Panc1 (cell line): ENCODE measurements at regions of chr1 and their contacts with region 1.

Region 1: DNA sequence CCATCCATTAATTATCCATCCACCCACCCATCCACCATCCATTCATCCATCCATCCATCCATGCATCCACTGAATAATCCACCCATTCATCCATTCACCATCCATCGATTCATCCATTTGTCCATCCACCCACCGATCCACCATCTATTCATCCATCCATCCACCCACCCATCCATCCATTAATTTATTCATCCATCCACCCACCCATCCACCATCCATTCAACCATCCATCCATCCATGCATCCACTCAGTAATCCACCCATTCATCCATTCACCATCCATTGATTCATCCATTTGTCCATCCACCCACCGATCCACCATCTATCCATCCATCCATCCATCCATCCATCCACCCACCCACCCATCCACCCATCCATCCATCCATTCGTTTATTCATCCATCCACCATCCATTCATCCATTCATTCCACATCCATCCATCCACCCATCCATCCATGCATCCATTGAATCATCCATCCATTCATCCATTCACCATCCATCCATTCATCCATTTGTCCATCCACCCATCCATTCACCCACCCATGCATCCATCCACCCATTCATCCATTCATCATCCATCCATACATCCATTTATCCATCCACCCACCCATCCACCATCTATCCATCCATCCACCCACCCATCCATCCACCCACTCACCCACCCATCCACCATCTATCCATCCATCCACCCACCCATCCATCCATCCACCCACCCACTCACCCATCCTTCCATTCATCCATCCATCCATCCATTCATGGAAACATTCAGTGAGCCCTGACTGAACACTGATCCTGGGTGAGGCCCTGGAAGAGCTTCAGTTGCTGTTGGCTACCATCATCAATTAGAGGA is 83.4 kb upstream of the ARHGEF16 start:
- DNase-seq: no peak
- ATAC-seq: no peak
- H3K4me3 ChIP-seq: no peak overlapping the region
- H3K27ac ChIP-seq: no peak overlapping the region
- H3K4me1 ChIP-seq: peaks cover 23% of the 10 kb centered on the region
- H3K27me3 ChIP-seq: no peaks in the 10 kb centered on the region
- CTCF ChIP-seq: no peak

Region 2: DNA sequence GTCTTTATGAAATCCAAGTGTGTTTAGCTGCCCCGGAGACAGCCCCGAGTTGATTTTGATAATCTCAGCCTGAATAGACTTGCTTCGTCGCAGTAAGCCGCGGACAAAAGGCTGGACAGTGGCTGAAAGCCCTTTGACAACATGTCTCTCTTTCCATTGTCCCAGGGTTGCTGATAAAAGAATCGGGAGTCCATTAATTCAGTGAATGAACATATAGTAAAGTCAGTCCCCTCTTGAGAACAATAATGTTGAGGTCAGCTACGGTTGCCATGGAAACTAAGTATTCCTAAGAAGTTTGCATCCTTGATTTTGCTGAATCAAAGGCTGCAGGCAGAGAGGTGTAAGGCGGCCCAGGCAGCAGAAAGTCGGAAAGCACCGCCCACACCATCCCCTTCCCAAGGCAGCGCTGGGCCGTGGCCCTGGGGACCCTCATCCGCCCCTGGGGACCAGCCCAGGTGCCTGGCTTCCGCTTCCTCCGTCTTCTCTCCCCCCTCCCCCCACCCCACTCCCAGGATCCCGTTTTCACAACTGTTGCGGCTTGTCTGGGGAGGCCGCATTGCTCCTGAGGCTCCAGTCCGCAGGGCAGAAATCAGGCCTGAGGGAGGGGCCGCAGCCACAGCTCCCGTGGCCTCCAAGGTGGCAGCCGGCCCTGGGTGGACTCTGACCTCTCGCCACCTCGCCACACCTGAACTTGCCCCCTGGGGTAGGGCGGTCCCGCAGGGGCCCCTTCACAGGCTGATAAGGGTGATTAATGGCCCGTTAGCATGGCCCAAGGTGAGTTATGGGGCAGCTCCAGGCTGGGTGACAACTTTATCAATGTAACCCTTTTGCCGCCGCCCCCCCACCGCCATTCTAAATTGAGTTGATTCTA is 121.2 kb before region 1 on chr1:
- CTCF ChIA-PET with region 1: no interaction called
- POLR2A ChIA-PET with region 1: interaction called, 15 read pairs
- in situ Hi-C with region 1: no loop called
- intact Hi-C with region 1: no loop called
- DNase-seq: no peak
- ATAC-seq: no peak
- H3K4me3 ChIP-seq: no peak overlapping the region
- H3K27ac ChIP-seq: no peak overlapping the region
- H3K4me1 ChIP-seq: no peaks in the 10 kb centered on the region
- H3K27me3 ChIP-seq: no peaks in the 10 kb centered on the region
- CTCF ChIP-seq: no peak